Naive thymus-derived CD4-positive, alpha-beta T cell (primary cell): ENCODE measurements at regions of chr21 and their contacts with region 1.

Region 1: GRCh38 chr21:26170471-26171257 is at the start of gene APP:
- DNase-seq: peak; percentile 81 to 99 (median 91)
- ATAC-seq: peak; percentile 95
- H3K4me3 ChIP-seq: peak within 1 kb of the TSS; percentile 67
- H3K4me3 Mint-ChIP-seq: peak within 1 kb of the TSS; percentile 91 to 99 (median 96)
- H3K27ac ChIP-seq: peak within 1 kb of the TSS; percentile 68
- H3K27ac Mint-ChIP-seq: peak within 1 kb of the TSS; percentile 68 to 94 (median 79)
- H3K4me1 ChIP-seq: peaks cover 0 to 6% of the 10 kb centered on the region in 2 donors
- H3K4me1 Mint-ChIP-seq: peaks cover 5 to 37% (median 22%) of the 10 kb centered on the region in 7 donors
- H3K27me3 ChIP-seq: no peaks in the 10 kb centered on the region
- H3K27me3 Mint-ChIP-seq: no peaks in the 10 kb centered on the region
- total RNA-seq, gene APP: 43.1 to 68.0 (median 56.2) TPM

Region 2: DNA sequence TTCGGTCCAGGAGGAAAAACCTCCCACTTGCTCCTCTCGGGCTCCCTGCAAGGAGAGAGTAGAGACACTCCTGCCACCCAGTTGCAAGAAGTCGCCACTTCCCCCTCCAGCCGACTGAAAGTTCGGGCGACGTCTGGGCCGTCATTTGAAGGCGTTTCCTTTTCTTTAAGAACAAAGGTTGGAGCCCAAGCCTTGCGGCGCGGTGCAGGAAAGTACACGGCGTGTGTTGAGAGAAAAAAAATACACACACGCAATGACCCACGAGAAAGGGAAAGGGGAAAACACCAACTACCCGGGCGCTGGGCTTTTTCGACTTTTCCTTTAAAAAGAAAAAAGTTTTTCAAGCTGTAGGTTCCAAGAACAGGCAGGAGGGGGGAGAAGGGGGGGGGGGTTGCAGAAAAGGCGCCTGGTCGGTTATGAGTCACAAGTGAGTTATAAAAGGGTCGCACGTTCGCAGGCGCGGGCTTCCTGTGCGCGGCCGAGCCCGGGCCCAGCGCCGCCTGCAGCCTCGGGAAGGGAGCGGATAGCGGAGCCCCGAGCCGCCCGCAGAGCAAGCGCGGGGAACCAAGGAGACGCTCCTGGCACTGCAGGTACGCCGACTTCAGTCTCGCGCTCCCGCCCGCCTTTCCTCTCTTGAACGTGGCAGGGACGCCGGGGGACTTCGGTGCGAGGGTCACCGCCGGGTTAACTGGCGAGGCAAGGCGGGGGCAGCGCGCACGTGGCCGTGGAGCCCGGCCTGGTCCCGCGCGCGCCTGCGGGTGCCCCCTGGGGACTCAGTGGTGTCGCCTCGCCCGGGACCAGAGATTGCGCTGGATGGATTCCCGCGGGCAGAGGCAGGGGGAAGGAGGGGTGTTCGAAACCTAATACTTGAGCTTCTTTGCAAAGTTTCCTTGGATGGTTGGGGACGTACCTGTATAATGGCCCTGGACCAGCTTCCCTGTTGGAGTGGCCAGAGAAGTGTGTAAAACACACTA is 608.7 kb before region 1 on chr21:
- CTCF ChIA-PET with region 1: no interaction called
- POLR2A ChIA-PET with region 1: no interaction called
- intact Hi-C with region 1: loop called in 1 of 2 experiments (anchors 2 kb)
- DNase-seq: peak; percentile 12 to 93 (median 43)
- ATAC-seq: peak; percentile 74
- H3K4me3 ChIP-seq: peak overlapping the region; percentile 34
- H3K4me3 Mint-ChIP-seq: peak overlapping the region; percentile 88 to 98 (median 94)
- H3K27ac ChIP-seq: peak overlapping the region; percentile 61
- H3K27ac Mint-ChIP-seq: peak overlapping the region; percentile 69 to 96 (median 92)
- H3K4me1 ChIP-seq: peaks cover 11 to 29% of the 10 kb centered on the region in 2 donors
- H3K4me1 Mint-ChIP-seq: peaks cover 27 to 68% (median 50%) of the 10 kb centered on the region in 7 donors
- H3K27me3 ChIP-seq: no peaks in the 10 kb centered on the region
- H3K27me3 Mint-ChIP-seq: no peaks in the 10 kb centered on the region

Region 3: DNA sequence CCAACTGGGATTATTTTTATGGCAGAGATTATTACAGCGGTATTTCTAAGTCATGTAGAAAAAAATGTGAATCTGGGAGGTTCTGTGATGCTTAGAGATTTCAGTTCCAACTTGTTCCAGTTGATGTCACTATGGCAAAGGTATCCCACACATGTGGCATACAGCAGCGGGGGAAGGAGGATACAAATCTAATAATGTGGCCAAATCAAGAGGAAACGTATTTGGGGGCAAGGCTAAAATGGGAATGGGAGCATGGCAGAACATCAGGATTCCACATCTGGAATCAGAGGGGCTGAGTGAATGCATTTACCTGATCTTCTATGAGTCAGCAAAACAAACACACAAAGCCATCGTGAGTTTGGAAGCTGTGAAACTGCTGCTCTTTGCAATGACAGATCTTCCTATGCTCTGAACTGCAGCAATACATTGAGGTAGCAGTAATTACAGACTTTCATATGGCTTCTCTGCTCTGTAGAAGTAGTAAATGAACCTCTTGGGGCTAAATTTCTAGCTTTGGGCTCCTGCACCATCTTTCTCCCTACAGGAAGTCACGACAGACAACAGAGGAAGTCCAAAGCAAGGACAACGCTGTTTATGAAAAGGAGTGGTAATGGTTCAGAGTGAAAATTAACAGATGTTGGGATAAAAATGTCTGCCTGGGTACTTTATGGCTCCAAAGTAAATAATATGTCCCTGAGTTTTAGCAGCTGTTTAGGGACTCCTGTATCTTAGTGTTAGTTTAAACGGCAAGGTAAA is 380.4 kb before region 1 on chr21:
- CTCF ChIA-PET with region 1: no interaction called
- POLR2A ChIA-PET with region 1: no interaction called
- intact Hi-C with region 1: loop called in 1 of 2 experiments (anchors 1 kb)
- DNase-seq: peak in 5 of 9 donors; percentile 11 to 25 (median 13)
- ATAC-seq: peak; percentile 69
- H3K4me3 ChIP-seq: peak overlapping the region; percentile 59
- H3K4me3 Mint-ChIP-seq: peak overlapping the region; percentile 67 to 93 (median 84)
- H3K27ac ChIP-seq: no peak overlapping the region
- H3K27ac Mint-ChIP-seq: peak overlapping the region in 4 of 9 donors; percentile 20 to 80 (median 45)
- H3K4me1 ChIP-seq: peaks cover 0 to 6% of the 10 kb centered on the region in 2 donors
- H3K4me1 Mint-ChIP-seq: peaks cover 6 to 15% (median 12%) of the 10 kb centered on the region in 7 donors
- H3K27me3 ChIP-seq: no peaks in the 10 kb centered on the region
- H3K27me3 Mint-ChIP-seq: peaks cover 9 to 26% (median 20%) of the 10 kb centered on the region in 5 donors

Region 4: DNA sequence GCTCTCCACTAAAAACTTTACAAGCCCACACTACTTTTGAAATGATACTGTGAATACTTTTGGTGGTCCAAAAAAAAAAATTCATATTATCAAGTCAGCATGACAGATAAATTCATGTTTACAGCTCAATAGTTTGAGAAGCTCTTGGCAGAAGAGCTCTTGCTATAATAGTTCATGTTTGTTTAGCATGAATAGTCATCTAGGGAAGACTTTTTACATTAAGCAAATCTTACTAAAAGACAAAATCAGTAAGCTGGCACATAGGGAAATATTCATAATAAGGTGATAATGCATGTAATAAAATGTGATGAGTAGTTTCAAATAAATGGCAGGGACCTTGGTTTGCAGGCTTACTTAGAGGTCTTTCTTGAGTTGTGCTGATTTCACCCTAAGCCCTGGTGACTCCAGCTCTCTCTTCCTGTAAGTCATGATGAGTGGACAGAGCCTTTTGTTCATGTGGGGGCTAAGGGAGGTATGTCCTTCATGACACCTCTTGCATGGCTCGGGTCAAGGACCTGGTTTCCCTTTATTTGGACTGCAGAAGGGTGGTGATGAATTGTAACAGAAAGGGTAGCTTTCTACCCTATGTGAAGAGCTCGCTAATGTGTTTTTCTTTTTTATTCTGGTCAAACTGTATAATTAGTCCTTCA is 269.2 kb before region 1 on chr21:
- CTCF ChIA-PET with region 1: interaction called, 15 read pairs
- POLR2A ChIA-PET with region 1: no interaction called
- intact Hi-C with region 1: no loop called
- DNase-seq: no peak
- ATAC-seq: no peak
- H3K4me3 ChIP-seq: no peak overlapping the region
- H3K4me3 Mint-ChIP-seq: no peak overlapping the region
- H3K27ac ChIP-seq: no peak overlapping the region
- H3K27ac Mint-ChIP-seq: peak overlapping the region in 2 of 9 donors; percentile 18 to 76
- H3K4me1 ChIP-seq: no peaks in the 10 kb centered on the region
- H3K4me1 Mint-ChIP-seq: peaks cover under 1 to 13% (median 9%) of the 10 kb centered on the region in 7 donors
- H3K27me3 ChIP-seq: no peaks in the 10 kb centered on the region
- H3K27me3 Mint-ChIP-seq: no peaks in the 10 kb centered on the region

Region 5: GRCh38 chr21:25913479-25913878 is 257.2 kb before region 1 on chr21:
- CTCF ChIA-PET with region 1: no interaction called
- POLR2A ChIA-PET with region 1: no interaction called
- intact Hi-C with region 1: no loop called
- DNase-seq: no peak
- ATAC-seq: no peak
- H3K4me3 ChIP-seq: no peak overlapping the region
- H3K4me3 Mint-ChIP-seq: no peak overlapping the region
- H3K27ac ChIP-seq: no peak overlapping the region
- H3K27ac Mint-ChIP-seq: no peak overlapping the region
- H3K4me1 ChIP-seq: no peaks in the 10 kb centered on the region
- H3K4me1 Mint-ChIP-seq: peaks cover 0 to 7% (median 0%) of the 10 kb centered on the region in 7 donors
- H3K27me3 ChIP-seq: no peaks in the 10 kb centered on the region
- H3K27me3 Mint-ChIP-seq: no peaks in the 10 kb centered on the region

Region 6: DNA sequence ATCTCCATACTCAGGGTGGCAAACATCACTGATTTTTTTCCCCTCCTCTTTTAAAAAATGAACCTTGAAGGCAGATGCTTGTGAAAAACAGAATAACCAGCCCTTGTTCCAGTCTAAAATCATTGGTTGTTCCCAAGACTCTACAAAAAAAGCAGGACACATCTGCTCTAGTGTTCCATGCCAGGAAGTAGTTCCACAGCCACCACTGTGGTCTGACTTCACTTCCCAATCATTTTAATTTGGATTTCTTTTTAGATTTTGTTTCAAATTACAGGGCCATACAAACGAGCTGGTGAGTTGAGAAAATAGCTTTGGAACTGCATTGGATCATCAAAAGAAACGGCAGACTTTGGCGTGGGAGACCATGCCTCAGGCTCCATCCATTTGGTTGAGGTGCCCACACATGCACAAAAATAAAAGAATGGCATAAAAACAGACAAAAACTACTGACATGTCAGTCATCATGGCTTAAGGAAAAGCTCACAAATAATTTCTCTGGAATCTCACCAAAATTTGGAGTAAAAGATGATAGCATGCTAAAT is 225.9 kb before region 1 on chr21:
- CTCF ChIA-PET with region 1: no interaction called
- POLR2A ChIA-PET with region 1: no interaction called
- intact Hi-C with region 1: no loop called
- DNase-seq: no peak
- ATAC-seq: no peak
- H3K4me3 ChIP-seq: no peak overlapping the region
- H3K4me3 Mint-ChIP-seq: no peak overlapping the region
- H3K27ac ChIP-seq: no peak overlapping the region
- H3K27ac Mint-ChIP-seq: no peak overlapping the region
- H3K4me1 ChIP-seq: no peaks in the 10 kb centered on the region
- H3K4me1 Mint-ChIP-seq: no peaks in the 10 kb centered on the region
- H3K27me3 ChIP-seq: no peaks in the 10 kb centered on the region
- H3K27me3 Mint-ChIP-seq: no peaks in the 10 kb centered on the region

Region 7: DNA sequence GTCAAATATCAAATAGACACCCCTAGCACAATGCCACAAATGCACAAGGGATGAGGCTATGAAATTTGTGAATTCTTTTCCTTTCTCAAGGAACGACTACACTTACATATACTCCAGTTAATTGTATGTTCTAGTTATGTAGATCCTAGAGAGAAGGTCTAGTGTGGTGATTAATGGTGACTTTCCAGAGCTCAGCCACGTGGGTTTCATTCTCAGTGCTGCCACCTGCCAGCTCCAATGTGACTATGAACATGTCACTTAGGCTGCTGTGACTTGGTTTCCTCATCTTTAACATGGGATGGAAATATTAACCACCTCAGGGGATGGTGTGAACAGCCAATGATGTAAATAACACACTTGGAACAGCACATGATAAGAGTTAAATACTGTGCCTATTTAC is 138.4 kb before region 1 on chr21:
- CTCF ChIA-PET with region 1: no interaction called
- POLR2A ChIA-PET with region 1: no interaction called
- intact Hi-C with region 1: loop called in 1 of 2 experiments (anchors 5 kb)
- DNase-seq: no peak
- ATAC-seq: no peak
- H3K4me3 ChIP-seq: no peak overlapping the region
- H3K4me3 Mint-ChIP-seq: no peak overlapping the region
- H3K27ac ChIP-seq: no peak overlapping the region
- H3K27ac Mint-ChIP-seq: no peak overlapping the region
- H3K4me1 ChIP-seq: no peaks in the 10 kb centered on the region
- H3K4me1 Mint-ChIP-seq: peaks cover 5 to 22% (median 15%) of the 10 kb centered on the region in 7 donors
- H3K27me3 ChIP-seq: no peaks in the 10 kb centered on the region
- H3K27me3 Mint-ChIP-seq: no peaks in the 10 kb centered on the region

Region 8: DNA sequence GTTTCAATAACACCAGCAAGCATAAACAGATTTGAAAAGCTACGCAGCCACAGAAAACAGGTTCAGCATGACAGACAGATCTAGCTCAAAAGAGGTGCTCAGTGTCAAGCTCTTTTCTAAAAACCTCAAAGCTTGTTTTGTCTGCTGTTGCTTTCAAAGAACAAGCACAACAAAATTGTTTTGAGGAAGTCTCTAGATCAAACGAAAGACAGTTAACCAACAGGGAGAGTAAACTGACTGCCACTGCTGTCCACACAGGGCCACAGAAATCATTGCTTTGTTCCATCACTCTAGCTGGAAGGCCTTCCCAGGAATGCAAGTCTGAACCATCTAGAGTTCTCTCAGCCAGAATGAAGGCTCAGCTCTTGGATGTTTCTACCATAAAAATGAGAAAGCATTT is 12.9 kb before region 1 on chr21:
- CTCF ChIA-PET with region 1: interaction called, 20 read pairs
- POLR2A ChIA-PET with region 1: interaction called, 9 read pairs
- intact Hi-C with region 1: no loop called
- DNase-seq: peak in 1 of 9 donors; percentile 18
- ATAC-seq: no peak
- H3K4me3 ChIP-seq: no peak overlapping the region
- H3K4me3 Mint-ChIP-seq: peak overlapping the region in 2 of 10 donors; percentile 8 to 41
- H3K27ac ChIP-seq: no peak overlapping the region
- H3K27ac Mint-ChIP-seq: peak overlapping the region in 7 of 9 donors; percentile 4 to 65 (median 22)
- H3K4me1 ChIP-seq: no peaks in the 10 kb centered on the region
- H3K4me1 Mint-ChIP-seq: peaks cover 11 to 35% (median 22%) of the 10 kb centered on the region in 7 donors
- H3K27me3 ChIP-seq: no peaks in the 10 kb centered on the region
- H3K27me3 Mint-ChIP-seq: no peaks in the 10 kb centered on the region